ENCODE measurements at regions of chr19 and their contacts with region 1.

Region 1: DNA sequence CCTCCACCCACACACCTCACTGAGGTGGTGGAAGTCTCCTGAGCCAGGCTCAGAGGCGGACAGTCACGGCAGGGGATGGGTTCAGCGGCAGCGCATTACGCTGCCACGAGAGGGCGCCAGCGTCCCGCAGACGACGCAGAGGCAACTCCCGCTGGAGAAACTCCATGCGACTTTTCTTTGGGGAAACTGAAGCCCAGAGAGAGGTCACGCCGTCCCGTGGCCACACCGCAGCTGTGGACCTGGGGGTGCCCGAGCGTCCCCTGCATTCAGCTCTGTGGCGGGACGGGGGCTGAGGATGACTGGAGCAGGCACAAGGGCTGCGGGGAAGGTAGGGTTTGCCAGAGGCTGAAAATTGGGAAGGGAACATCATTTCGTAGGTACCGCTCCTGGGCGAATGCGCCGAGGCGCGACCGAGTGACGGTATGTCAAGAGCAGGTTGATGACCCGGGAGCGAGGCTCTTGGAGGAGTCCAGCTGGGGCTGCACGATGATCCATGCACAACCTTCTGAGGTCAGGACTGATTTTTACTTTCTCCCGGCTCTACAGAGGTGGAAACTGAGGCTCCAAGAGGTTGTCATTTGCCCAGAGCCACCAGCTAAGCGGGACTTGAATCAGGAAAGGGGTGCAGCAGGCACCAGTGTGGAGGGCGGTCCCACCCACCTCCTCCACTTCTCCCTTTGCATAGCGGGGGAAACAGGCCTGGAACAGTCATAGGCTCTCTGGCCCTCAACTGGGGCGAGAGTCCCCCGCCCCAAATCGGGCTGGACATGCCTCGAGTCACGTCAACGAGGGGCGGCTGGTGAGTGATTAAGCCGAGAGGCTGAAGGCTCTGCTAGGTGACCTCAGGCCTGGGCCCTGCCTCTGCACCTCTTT is 690 bp upstream of the ARRDC2 start:
- DNase-seq: peak; percentile 92
- ATAC-seq: peak; percentile 93

Region 2: DNA sequence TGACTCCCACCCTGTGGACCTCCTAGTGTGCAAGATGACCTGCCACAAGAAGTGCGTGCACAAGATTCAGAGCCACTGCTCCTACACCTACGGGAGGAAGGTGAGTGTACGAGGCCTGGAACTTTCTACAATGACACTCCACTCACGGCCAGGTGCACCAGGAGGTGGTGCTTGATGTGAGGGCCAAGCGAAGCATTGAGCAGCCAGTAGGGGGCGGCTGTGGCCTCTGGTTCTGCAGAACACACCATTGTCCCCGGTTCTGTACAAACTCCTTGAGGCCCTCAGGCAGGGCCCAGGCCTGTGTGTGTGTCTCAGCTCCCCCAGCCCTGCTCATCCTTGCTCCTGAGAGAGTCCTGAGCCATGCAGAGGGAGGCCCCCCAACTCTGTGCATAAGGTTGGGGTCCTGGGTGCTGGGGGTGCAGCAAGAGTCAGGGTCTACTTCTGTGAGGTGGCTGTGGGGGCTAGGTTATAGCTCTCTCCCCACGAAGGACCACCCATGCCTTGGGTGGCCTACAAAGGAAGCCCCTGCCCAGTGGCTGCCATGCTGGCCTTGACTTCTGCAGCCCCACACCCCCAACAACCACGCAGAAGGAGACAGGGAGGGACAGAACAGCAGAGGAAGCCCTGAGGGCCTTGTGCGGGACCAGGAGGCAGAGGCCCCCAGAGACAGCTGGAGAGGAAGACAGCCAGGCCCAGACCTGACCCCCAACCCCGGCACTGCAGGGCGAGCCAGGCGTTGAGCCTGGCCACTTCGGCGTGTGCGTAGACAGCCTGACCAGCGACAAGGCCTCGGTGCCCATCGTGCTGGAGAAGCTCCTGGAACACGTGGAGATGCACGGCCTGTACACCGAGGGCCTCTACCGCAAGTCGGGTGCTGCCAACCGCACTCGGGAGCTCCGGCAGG is 801.8 kb before region 1 on chr19:
- intact Hi-C with region 1: no loop called
- DNase-seq: no peak
- ATAC-seq: peak; percentile 55

Region 3: DNA sequence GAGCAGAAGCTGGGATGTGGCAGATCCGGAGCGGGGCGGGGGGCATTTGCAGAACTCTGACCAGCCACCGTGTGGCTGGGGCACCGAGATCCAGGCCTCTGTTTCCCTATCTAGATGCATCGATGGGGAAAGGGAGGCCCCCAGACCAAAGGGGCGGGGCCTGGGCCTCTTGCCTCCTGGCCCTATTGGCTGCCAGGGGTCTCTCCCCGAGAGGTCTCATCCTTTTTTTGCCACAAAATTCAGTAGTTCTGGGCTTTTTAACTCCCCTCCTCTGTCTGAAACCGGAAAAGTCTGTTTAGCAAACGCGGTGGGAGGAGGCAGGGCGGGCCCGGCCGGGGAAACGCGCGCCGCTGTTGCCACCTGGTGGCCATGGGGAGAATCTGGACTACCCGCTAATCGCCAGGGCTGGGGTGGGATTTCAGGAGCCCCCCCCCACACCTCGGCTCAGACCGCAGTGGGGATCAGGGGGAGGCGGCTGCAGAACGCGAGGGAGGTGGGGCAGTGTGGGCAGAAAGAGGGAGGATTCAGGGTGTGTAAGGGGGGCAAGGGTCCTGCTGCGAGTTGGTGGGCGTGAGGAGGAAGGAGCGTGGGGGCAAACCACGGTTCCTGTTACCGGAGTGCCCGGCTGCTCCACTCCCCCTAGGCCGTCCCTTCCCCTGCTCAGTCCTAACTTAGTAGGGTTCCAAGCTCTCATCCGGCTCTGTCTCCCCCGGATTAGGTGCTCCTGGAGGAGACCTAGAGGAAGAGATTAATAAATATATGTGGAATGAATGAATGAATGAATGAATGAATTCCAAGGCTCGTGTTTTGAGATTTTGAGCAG is 51.1 kb after region 1 on chr19:
- intact Hi-C with region 1: loop called (anchors 5 kb)
- DNase-seq: peak; percentile 91
- ATAC-seq: peak; percentile 94